ENCODE measurements at regions of chr11 and their contacts with region 1.

Region 1: DNA sequence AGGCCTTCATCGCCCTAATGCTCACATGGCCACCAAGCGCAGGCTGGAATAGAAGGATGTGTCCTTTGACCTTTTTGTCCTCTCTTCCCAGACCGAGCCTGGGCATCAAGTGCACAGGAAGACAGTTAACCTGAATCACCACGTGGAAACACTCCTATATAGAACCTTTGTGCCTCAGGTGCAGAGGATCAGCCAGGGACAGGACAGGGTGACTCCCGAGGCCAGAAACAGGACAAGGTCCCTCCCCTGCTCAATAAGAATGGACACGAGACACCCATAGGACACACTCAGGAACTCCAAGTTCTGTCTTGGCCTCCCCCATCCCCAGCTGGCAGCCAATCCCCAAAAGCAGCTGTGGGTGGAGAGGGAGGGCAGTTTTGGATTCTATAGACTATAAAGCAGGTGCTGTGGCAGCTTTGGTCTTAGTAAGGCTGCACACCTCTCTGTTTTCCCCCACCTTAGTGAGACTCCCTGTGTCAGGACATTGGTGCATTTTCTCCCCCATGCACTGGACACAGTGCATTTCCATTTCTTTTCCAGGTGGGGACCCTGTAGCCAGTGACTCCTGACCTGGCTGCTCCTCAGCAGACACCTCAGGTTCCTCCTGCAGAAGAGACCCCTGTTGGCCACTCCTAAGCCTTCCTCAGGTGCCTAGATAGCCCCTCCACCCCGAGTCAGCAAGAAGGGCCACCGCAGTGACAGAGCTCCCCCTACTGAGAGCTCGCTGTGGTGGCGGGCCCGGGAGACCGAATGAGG is 43.6 kb upstream of the POU2AF1 start:
- DNase-seq: peak; percentile 76
- H3K4me3 ChIP-seq: no peak overlapping the region
- H3K27ac ChIP-seq: no peak overlapping the region
- H3K4me1 ChIP-seq: peaks cover 0 to 44% (median 37%) of the 10 kb centered on the region in 4 donors
- H3K27me3 ChIP-seq: no peaks in the 10 kb centered on the region
- CTCF ChIP-seq: peak; percentile 33 to 68 (median 66)
- EP300 ChIP-seq: no peak
- POLR2A ChIP-seq: no peak

Region 2: GRCh38 chr11:111105566-111105965 is 317.1 kb before region 1 on chr11:
- intact Hi-C with region 1: no loop called
- DNase-seq: no peak
- H3K4me3 ChIP-seq: no peak overlapping the region
- H3K27ac ChIP-seq: no peak overlapping the region
- H3K4me1 ChIP-seq: no peaks in the 10 kb centered on the region
- H3K27me3 ChIP-seq: no peaks in the 10 kb centered on the region
- CTCF ChIP-seq: no peak
- EP300 ChIP-seq: no peak
- POLR2A ChIP-seq: no peak

Region 3: DNA sequence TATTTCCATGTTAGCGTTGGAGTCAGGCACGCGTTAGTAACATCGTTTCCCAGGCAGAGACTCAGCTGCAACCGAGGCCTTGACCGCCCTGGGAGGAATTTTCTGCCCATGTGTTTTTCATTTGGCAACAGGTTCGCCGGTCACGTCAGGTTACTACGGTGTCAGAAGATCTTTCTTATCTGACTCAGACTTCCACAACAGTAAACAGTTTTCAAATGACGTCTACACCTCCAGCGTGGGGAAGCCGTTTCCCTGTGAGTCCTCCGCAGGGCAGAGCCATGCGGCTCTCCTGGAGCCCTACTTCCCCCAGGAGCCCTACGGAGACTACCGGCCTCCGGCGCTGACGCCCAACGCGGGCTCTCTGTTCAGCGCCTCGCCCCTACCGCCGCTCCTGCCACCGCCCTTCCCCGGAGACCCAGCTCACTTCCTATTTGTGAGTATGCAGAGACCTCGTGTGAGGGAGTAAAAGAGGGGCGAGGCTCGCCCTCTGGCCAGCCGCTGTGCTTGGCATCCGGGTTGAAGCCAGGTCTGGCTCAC is 138.7 kb before region 1 on chr11:
- intact Hi-C with region 1: loop called (anchors 2 kb)
- DNase-seq: no peak
- H3K4me3 ChIP-seq: no peak overlapping the region
- H3K27ac ChIP-seq: no peak overlapping the region
- H3K4me1 ChIP-seq: peaks cover 0 to 29% (median 12%) of the 10 kb centered on the region in 4 donors
- H3K27me3 ChIP-seq: no peaks in the 10 kb centered on the region
- CTCF ChIP-seq: no peak
- EP300 ChIP-seq: no peak
- POLR2A ChIP-seq: no peak

Region 4: GRCh38 chr11:111299101-111300026 is 123.3 kb before region 1 on chr11:
- intact Hi-C with region 1: loop called (anchors 2 kb)
- DNase-seq: peak; percentile 83
- H3K4me3 ChIP-seq: peak overlapping the region; percentile 76 to 93 (median 88)
- H3K27ac ChIP-seq: peak overlapping the region; percentile 77 to 96 (median 93)
- H3K4me1 ChIP-seq: peaks cover 0 to 48% (median 31%) of the 10 kb centered on the region in 4 donors
- H3K27me3 ChIP-seq: no peaks in the 10 kb centered on the region
- CTCF ChIP-seq: peak; percentile 67 to 70 (median 68)
- EP300 ChIP-seq: no peak
- POLR2A ChIP-seq: peak in 1 of 2 donors; percentile 9

Region 5: GRCh38 chr11:111334532-111335502 is 87.9 kb before region 1 on chr11:
- intact Hi-C with region 1: loop called (anchors 5 kb)
- DNase-seq: no peak
- H3K4me3 ChIP-seq: no peak overlapping the region
- H3K27ac ChIP-seq: peak overlapping the region in 1 of 4 donors; percentile 30
- H3K4me1 ChIP-seq: peaks cover 0 to 46% (median 35%) of the 10 kb centered on the region in 4 donors
- H3K27me3 ChIP-seq: no peaks in the 10 kb centered on the region
- CTCF ChIP-seq: no peak
- EP300 ChIP-seq: no peak
- POLR2A ChIP-seq: no peak

Region 6: GRCh38 chr11:111347723-111348115 is 75.0 kb before region 1 on chr11:
- intact Hi-C with region 1: loop called (anchors 5 kb)
- DNase-seq: no peak
- H3K4me3 ChIP-seq: no peak overlapping the region
- H3K27ac ChIP-seq: peak overlapping the region in 2 of 4 donors; percentile 22 to 56
- H3K4me1 ChIP-seq: peaks cover 0 to 15% (median 8%) of the 10 kb centered on the region in 4 donors
- H3K27me3 ChIP-seq: no peaks in the 10 kb centered on the region
- CTCF ChIP-seq: no peak
- EP300 ChIP-seq: no peak
- POLR2A ChIP-seq: no peak

Region 7: DNA sequence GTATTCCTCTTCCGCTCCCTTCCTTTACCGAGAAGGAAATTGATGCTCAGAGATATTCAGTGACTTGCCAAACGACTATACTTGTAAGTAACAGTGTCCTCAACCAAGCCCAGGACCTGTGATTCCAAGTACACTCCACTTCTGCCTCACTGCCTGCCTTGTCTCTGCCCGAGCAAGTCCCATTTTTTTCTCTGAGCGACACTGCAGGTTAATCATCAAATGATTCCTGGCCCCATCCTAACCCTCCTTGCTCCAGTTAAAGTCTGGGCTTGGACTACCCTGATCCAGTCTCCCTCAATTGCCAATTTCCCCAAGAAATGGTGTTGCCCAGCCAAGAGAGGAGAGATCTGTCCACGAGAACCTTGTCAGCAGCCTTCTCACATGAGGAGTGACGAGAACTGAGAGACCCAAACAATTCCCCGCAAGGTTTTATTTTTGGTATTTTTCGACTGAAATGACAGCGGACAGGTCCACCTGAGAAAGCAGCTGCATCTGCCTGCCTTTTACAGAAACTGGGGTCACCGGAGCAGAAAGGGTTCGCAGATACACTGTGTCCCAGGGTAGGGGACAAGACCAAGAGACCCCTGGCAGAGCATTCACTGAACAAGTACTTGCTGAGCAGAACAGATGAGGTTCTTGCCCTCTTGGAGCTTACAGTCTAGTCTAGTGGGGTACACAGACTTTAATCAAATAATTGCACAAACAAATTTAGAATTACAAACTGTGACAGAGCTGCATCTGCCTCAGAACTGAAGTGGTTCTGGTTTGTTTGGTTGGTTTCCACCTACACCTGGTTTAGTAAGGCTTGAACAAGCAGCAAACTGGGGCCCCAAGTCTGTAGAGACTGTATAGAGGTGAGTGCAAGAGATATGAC is 55.0 kb before region 1 on chr11:
- intact Hi-C with region 1: no loop called
- DNase-seq: no peak
- H3K4me3 ChIP-seq: no peak overlapping the region
- H3K27ac ChIP-seq: no peak overlapping the region
- H3K4me1 ChIP-seq: peaks cover 0 to 14% (median 6%) of the 10 kb centered on the region in 4 donors
- H3K27me3 ChIP-seq: no peaks in the 10 kb centered on the region
- CTCF ChIP-seq: no peak
- EP300 ChIP-seq: no peak
- POLR2A ChIP-seq: no peak